Ovary (tissue), 10 donors: ENCODE measurements at regions of chr2 and their contacts with region 1.

Region 1: DNA sequence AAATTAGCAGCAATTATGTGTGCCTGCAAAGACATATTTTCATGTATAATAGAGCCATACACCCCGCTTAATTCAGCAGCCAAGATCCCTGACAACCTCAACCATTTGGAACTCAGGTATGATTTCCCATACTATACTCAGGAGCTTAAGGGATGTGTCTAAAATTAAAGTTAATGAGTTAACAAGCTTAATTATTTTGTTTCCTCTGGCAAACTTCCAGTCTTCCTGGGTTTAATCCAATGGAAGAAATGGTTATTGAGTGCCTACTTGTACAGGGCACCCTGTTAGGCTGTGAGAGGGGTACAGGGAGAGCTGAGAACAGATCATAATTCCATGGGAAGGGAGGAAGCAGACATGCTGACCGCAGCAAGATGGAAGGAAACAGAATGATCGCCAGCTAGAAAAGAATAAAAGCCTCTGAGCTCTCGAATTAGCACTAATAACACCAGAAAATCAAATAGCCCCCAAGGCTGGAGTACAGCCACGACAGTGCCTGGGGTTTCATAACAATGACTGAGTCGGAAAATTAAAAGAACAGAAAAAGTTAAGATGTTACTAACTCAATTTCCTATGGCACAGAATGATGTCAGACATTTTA is 20.8 kb upstream of the CEP68 start:
- DNase-seq: no peak
- H3K4me3 ChIP-seq: no peak overlapping the region
- H3K27ac ChIP-seq: no peak overlapping the region
- H3K4me1 ChIP-seq: no peaks in the 10 kb centered on the region
- H3K27me3 ChIP-seq: no peaks in the 10 kb centered on the region
- CTCF ChIP-seq: no peak
- EP300 ChIP-seq: no peak
- POLR2A ChIP-seq: no peak

Region 2: GRCh38 chr2:64988420-64989125 is 46.9 kb before region 1 on chr2:
- intact Hi-C with region 1: loop called in 1 of 4 experiments (anchors 5 kb)
- DNase-seq: peak; percentile 67 to 82 (median 72)
- H3K4me3 ChIP-seq: peak overlapping the region; percentile 87
- H3K27ac ChIP-seq: peak overlapping the region; percentile 92 to 94
- H3K4me1 ChIP-seq: peaks cover 4% of the 10 kb centered on the region
- H3K27me3 ChIP-seq: no peaks in the 10 kb centered on the region
- CTCF ChIP-seq: peak in 2 of 3 donors; percentile 75 to 86
- EP300 ChIP-seq: no peak
- POLR2A ChIP-seq: peak; percentile 68